SK-N-SH (cell line): ENCODE measurements at regions of chr9 and their contacts with region 1.

Region 1: GRCh38 chr9:119961774-119962424 is 592.7 kb upstream of the BRINP1 start:
- DNase-seq: peak; percentile 73
- H3K4me3 ChIP-seq: peak overlapping the region in 1 of 2 experiments; percentile 46; a peak in 1 of 4 replicates
- H3K27ac ChIP-seq: no peak overlapping the region
- H3K4me1 ChIP-seq: peaks cover 0 to 9% of the 10 kb centered on the region in 2 experiments; a peak in 2 of 4 replicates
- H3K27me3 ChIP-seq: no peaks in the 10 kb centered on the region
- CTCF ChIP-seq: peak; percentile 87
- EP300 ChIP-seq: no peak
- RAD21 ChIP-seq: peak; percentile 66

Region 2: GRCh38 chr9:119556129-119556875 is 405.6 kb before region 1 on chr9:
- CTCF ChIA-PET with region 1: interaction called, 46 read pairs
- POLR2A ChIA-PET with region 1: no interaction called
- DNase-seq: peak; percentile 81
- H3K4me3 ChIP-seq: peak overlapping the region; percentile 41 to 62
- H3K27ac ChIP-seq: peak overlapping the region in 1 of 2 experiments; percentile 86; a peak in 2 of 4 replicates
- H3K4me1 ChIP-seq: peaks cover 0 to 10% of the 10 kb centered on the region in 2 experiments; a peak in 1 of 4 replicates
- H3K27me3 ChIP-seq: no peaks in the 10 kb centered on the region
- CTCF ChIP-seq: peak; percentile 86
- EP300 ChIP-seq: no peak
- RAD21 ChIP-seq: peak; percentile 76

Region 3: DNA sequence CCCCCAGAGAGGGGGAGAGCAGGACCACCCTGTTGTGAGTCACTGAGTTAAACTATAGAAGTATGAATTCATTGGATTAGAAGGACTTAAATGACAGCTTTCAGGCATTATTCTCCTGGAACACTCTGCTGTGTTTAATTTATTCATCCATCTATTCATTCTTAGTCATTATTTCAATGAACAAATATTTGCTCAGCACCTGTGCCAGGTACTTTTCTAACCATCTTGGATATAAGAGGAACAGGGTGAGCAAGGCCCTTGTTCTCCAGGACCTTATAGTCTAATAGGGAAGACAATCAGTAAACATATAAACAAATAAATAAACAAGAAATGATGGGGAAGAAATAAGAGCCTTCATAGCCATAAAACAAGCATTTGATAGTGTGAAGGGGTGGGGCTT is 108.8 kb before region 1 on chr9:
- CTCF ChIA-PET with region 1: no interaction called
- POLR2A ChIA-PET with region 1: no interaction called
- DNase-seq: no peak
- H3K4me3 ChIP-seq: no peak overlapping the region
- H3K27ac ChIP-seq: peak overlapping the region in 1 of 2 experiments; percentile 70; a peak in 2 of 4 replicates
- H3K4me1 ChIP-seq: peaks cover 0 to 11% of the 10 kb centered on the region in 2 experiments; a peak in 1 of 4 replicates
- H3K27me3 ChIP-seq: no peaks in the 10 kb centered on the region
- CTCF ChIP-seq: no peak
- EP300 ChIP-seq: no peak
- RAD21 ChIP-seq: no peak